IMR-90 (cell line): ENCODE measurements at regions of chr7 and their contacts with region 1.

Region 1: GRCh38 chr7:23520582-23520981 is 11.2 kb downstream of the TRA2A start:
- DNase-seq: no peak
- ATAC-seq: no peak
- H3K4me3 ChIP-seq: no peak overlapping the region
- H3K27ac ChIP-seq: no peak overlapping the region
- H3K4me1 ChIP-seq: peaks cover 3% of the 10 kb centered on the region
- H3K27me3 ChIP-seq: no peaks in the 10 kb centered on the region
- CTCF ChIP-seq: 0 out of 2 replicates have a peak, but pooled peaks have one; percentile 17
- POLR2A ChIP-seq: no peak
- RAD21 ChIP-seq: peak; percentile 14

Region 2: DNA sequence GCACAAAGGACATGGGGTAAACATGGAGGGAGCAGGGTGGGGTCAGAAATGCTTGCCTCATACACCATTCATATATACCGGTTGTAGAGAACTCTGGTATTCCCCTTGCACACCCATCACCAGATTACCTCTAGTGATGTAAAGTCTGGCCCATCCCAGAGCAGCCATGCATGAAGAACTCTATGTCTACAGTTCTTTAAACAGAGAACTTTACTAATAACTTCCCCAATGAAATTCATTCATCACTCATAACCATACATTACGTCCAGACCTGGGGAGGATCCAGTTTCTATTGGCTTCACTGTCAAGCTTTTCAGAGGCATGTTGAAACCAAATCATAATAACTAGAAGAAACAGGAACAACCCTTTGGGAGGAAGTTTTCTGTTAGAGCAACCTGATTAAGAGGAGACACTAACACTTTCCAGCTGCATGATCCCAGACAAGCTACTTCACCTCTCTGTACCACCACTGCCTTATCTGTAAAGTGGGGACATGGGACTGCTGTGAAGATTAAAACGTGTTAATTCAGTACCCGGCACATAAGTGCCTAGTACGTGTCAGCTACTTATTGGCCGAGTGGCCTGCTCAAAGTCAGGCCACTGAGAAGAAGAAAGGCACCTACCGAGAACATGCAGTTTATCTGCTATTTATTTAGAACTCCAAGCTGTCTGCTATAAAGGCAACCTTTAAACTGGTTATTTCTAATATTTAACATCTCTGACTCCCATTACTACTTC is 110.0 kb before region 1 on chr7:
- CTCF ChIA-PET with region 1: no interaction called
- POLR2A ChIA-PET with region 1: interaction called, 19 read pairs
- dilution Hi-C with region 1: no loop called
- in situ Hi-C with region 1: no loop called
- intact Hi-C with region 1: no loop called
- DNase-seq: no peak
- ATAC-seq: no peak
- H3K4me3 ChIP-seq: no peak overlapping the region
- H3K27ac ChIP-seq: no peak overlapping the region
- H3K4me1 ChIP-seq: no peaks in the 10 kb centered on the region
- H3K27me3 ChIP-seq: no peaks in the 10 kb centered on the region
- CTCF ChIP-seq: no peak
- POLR2A ChIP-seq: no peak
- RAD21 ChIP-seq: no peak

Region 3: DNA sequence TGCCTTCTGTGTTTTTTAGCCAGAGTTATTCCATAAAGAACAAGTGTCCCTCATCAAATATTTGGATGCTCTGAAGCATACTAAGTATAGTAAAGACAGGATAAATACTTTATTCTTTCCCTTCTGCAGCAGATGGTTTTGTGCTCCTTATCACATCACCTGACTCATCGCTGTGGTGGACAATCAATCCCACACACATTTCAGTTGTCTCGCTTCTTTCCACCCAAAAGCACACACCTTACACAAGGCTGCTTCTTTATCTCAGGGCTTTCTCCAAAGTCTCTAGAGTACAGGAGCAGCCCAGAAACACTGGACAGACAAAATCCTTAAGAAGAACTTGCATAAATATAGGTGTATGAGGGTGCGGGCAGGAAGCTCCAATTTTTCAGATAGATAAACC is 93.7 kb before region 1 on chr7:
- CTCF ChIA-PET with region 1: no interaction called
- POLR2A ChIA-PET with region 1: no interaction called
- dilution Hi-C with region 1: no loop called
- in situ Hi-C with region 1: no loop called
- intact Hi-C with region 1: no loop called
- DNase-seq: peak; percentile 63
- ATAC-seq: no peak
- H3K4me3 ChIP-seq: no peak overlapping the region
- H3K27ac ChIP-seq: no peak overlapping the region
- H3K4me1 ChIP-seq: peaks cover 9% of the 10 kb centered on the region
- H3K27me3 ChIP-seq: no peaks in the 10 kb centered on the region
- CTCF ChIP-seq: no peak
- POLR2A ChIP-seq: no peak
- RAD21 ChIP-seq: no peak